K562 (cell line): ENCODE measurements at regions of chr7 and their contacts with region 1.

Region 1: DNA sequence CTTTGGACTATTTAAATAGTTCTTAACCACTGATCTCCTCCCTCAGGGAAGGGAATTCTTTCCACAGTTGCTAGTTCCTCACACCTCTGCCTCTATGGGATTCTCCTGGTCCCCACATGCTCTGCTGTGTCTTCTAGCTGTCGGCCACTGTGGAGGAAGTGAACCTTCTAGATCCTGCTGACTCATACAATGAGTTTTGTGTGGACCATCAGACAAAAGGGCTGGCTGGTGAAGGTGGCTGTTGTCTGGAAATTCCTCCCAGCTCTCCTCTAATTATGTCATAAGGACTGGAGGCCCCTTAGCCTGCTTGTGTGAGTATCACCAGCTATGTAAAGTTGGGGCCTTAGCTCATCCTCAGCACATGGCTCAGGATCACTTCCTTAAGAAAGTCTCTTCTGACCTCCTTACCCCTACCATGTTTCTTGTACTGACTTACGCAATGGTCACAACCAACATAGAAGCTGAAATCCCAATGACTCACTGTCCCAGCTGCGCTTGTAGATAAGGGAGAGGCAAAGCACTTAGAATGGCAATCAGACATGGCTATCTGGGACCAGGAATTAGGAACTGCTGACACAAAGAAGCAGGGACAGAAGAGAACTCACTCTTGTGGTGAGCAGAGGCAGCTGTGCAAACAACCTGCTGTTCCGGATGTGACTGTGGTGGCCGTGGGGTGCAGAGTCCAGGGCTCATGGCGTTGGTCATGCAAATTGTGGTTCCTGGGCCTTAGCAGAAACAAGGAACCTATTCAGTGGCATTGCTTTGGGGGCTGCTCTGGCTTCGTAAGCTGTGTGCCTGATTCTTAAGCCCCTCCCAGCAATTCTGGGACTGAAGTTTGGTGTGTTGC is 2.5 kb upstream of the MACC1 start:
- DNase-seq: peak; percentile 84 to 99 (median 85)
- ATAC-seq: peak; percentile 86
- H3K4me3 ChIP-seq: no peak overlapping the region
- H3K27ac ChIP-seq: peak overlapping the region; percentile 99
- H3K4me1 ChIP-seq: peaks cover 6 to 66% of the 10 kb centered on the region in 2 experiments
- H3K27me3 ChIP-seq: no peaks in the 10 kb centered on the region
- CTCF ChIP-seq: peak in 2 of 3 experiments; percentile 18 to 32; a peak in 3 of 6 replicates
- EP300 ChIP-seq: peak; percentile 100
- POLR2A ChIP-seq: peak; percentile 65; the same call in 1 of the 2 replicates
- RAD21 ChIP-seq: peak; percentile 52 to 54

Region 2: DNA sequence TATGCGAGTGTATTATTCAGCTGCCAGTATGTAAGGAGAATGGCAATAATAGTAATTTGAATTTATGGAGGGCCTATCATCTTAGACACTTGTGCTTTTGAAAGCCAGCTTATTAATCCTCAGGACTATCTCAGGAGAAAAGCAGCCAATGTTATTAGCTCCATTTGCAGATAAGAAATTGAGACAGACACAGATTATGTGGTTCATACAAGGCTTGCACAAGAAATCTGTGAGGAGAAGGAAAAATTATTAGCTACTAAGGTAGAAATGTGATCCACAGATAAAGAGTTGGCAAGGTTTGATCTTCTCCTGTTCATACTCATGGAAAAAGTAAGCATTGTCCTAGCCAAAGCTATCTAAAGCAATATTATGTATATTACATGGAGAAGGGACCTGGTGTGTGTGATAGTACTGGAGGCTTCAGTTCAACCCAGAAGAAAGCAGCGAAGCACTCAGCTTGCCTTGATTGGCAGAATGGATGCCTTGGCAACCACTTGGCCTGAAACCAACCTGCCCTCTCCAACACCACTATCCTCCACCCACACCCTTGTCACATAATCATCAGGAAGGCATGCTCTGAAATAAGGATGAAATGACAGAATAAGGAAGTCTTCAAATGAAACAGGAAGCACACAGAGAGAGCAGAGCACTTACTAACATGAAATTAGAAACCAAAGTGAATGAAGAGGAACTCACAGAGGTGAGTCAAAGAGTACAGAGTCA is 20.5 kb before region 1 on chr7:
- CTCF ChIA-PET with region 1: no interaction called
- POLR2A ChIA-PET with region 1: interaction called, 20 read pairs
- in situ Hi-C with region 1: no loop called
- intact Hi-C with region 1: no loop called
- DNase-seq: peak; percentile 18 to 76 (median 33)
- ATAC-seq: peak; percentile 84
- H3K4me3 ChIP-seq: no peak overlapping the region
- H3K27ac ChIP-seq: peak overlapping the region; percentile 62; the same call in 2 of the 3 replicates
- H3K4me1 ChIP-seq: peaks cover 0 to 42% of the 10 kb centered on the region in 2 experiments; a peak in 4 of 5 replicates
- H3K27me3 ChIP-seq: no peaks in the 10 kb centered on the region
- CTCF ChIP-seq: no peak
- EP300 ChIP-seq: 0 out of 2 replicates have a peak, but pooled peaks have one; percentile 21
- POLR2A ChIP-seq: no peak
- RAD21 ChIP-seq: no peak

Region 3: GRCh38 chr7:20229646-20230500 is 10.2 kb after region 1 on chr7:
- CTCF ChIA-PET with region 1: no interaction called
- POLR2A ChIA-PET with region 1: interaction called, 12 read pairs
- in situ Hi-C with region 1: no loop called
- intact Hi-C with region 1: no loop called
- DNase-seq: peak in 2 of 4 experiments; percentile 20 to 28
- ATAC-seq: peak; percentile 16; the same call in 2 of the 3 replicates
- H3K4me3 ChIP-seq: no peak overlapping the region
- H3K27ac ChIP-seq: no peak overlapping the region
- H3K4me1 ChIP-seq: peaks cover 0 to 18% of the 10 kb centered on the region in 2 experiments; a peak in 3 of 5 replicates
- H3K27me3 ChIP-seq: no peaks in the 10 kb centered on the region
- CTCF ChIP-seq: no peak
- EP300 ChIP-seq: no peak
- POLR2A ChIP-seq: no peak
- RAD21 ChIP-seq: no peak

Region 4: DNA sequence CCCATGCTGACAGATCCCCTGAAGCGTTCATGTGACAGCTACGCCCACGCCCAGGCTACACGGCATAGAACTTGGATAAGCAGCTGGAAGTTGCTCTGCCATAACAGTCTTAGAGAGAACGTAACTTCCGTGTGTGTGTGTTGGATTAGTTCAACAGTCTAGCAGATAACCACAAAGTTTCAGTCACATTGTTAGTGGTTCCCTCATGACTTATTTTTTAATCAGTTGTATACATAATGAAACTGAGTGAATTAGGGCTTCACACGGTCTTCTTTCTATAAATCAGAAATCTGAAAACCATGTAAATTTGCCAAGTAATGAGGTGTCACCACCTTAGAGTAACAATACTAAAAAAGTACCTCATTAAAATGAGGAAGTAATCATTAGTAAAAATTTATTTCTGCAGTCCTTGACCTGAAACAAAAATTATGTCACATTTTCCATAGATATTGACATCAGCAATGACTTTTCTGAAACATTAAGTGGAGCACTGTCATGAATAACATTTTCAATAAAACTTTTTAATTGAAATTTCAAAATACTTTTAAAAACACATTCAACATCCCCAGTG is 19.2 kb after region 1 on chr7:
- CTCF ChIA-PET with region 1: no interaction called
- POLR2A ChIA-PET with region 1: interaction called, 6 read pairs
- in situ Hi-C with region 1: no loop called
- intact Hi-C with region 1: loop called (anchors 1 kb)
- DNase-seq: peak; percentile 49 to 90 (median 60)
- ATAC-seq: peak; percentile 93
- H3K4me3 ChIP-seq: no peak overlapping the region
- H3K27ac ChIP-seq: peak overlapping the region; percentile 70
- H3K4me1 ChIP-seq: peaks cover 0 to 18% of the 10 kb centered on the region in 2 experiments; a peak in 3 of 5 replicates
- H3K27me3 ChIP-seq: no peaks in the 10 kb centered on the region
- CTCF ChIP-seq: no peak
- EP300 ChIP-seq: peak; percentile 86
- POLR2A ChIP-seq: 0 out of 2 replicates have a peak, but pooled peaks have one; percentile 21
- RAD21 ChIP-seq: no peak

Region 5: DNA sequence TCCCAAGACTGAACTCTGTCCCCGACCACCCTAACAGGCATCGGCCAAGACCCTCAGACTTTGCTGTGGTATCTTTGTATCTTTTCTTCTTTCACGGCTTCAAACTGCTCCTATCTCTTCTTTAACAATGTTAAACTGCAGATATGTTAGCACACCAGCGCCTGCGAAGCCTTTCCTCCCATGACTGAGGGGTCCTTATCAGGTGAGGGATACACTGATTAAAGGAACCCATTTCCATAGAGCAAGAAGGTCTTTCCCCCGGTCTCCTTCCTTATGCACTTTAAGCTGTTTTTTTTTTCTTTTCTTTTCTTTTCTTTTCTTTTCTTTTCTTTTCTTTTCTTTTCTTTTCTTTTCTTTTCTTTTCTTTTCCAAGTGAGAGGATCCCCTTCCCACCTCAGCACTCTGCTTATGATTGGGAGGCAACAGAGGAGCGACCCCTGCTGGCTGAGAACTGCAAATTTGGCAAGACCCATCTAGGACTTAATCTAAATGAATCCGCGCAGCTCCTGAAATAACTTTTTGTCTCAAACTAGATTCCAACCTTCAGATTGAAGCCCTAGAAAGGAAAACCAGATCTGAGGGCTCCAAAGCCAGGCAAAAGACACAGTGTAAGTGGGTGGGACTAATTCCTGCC is 220.9 kb after region 1 on chr7:
- CTCF ChIA-PET with region 1: no interaction called
- POLR2A ChIA-PET with region 1: no interaction called
- in situ Hi-C with region 1: no loop called
- intact Hi-C with region 1: no loop called
- DNase-seq: peak; percentile 47 to 71 (median 66)
- ATAC-seq: peak; percentile 92
- H3K4me3 ChIP-seq: no peak overlapping the region
- H3K27ac ChIP-seq: no peak overlapping the region
- H3K4me1 ChIP-seq: no peaks in the 10 kb centered on the region
- H3K27me3 ChIP-seq: 0 out of 5 replicates have a peak, but pooled peaks cover 0 to 4% of the 10 kb centered on the region in 2 experiments
- CTCF ChIP-seq: peak; percentile 64 to 76 (median 71)
- EP300 ChIP-seq: no peak
- POLR2A ChIP-seq: no peak
- RAD21 ChIP-seq: peak; percentile 51 to 58